ENCODE measurements at regions of chr9 and their contacts with region 1.

Region 1: GRCh38 chr9:72586388-72587130 is 65.2 kb downstream of the TMC1 start:
- DNase-seq: peak in 1 of 9 donors; percentile 28
- ATAC-seq: peak; percentile 86
- H3K4me3 ChIP-seq: no peak overlapping the region
- H3K4me3 Mint-ChIP-seq: peak overlapping the region in 1 of 10 donors; percentile 61
- H3K27ac ChIP-seq: no peak overlapping the region
- H3K27ac Mint-ChIP-seq: peak overlapping the region in 2 of 9 donors; percentile 23 to 56
- H3K4me1 ChIP-seq: no peaks in the 10 kb centered on the region
- H3K4me1 Mint-ChIP-seq: peaks cover 6 to 51% (median 11%) of the 10 kb centered on the region in 7 donors
- H3K27me3 ChIP-seq: no peaks in the 10 kb centered on the region
- H3K27me3 Mint-ChIP-seq: no peaks in the 10 kb centered on the region

Region 2: DNA sequence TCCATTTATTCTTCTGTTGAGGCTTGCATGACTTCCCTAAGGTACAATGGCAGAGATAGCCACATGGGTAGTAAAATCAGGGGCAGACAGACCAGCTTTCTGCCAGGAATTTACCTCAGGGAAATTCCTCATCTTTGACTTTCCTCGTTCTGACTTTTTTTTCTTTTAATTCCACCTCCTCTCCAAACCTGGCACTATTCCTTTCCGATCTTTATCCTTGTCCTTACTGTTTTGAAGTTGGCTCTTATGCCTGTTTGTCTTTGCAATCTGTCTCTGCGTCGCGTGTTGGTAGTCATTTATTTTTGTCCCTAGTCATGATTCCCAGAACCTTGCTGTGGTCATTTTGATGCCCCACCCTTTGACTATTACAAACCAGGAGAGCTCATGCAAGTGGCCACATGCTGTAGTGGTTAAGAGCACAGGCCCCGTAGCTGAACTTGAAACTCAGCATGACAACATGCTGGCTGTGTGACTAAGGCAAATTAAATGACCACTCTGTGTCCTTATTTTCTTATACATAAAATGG is 46.1 kb before region 1 on chr9:
- CTCF ChIA-PET with region 1: no interaction called
- POLR2A ChIA-PET with region 1: no interaction called
- intact Hi-C with region 1: loop called in 1 of 2 experiments (anchors 5 kb)
- DNase-seq: no peak
- ATAC-seq: no peak
- H3K4me3 ChIP-seq: no peak overlapping the region
- H3K4me3 Mint-ChIP-seq: no peak overlapping the region
- H3K27ac ChIP-seq: no peak overlapping the region
- H3K27ac Mint-ChIP-seq: no peak overlapping the region
- H3K4me1 ChIP-seq: no peaks in the 10 kb centered on the region
- H3K4me1 Mint-ChIP-seq: peaks cover 0 to 31% (median 0%) of the 10 kb centered on the region in 7 donors
- H3K27me3 ChIP-seq: no peaks in the 10 kb centered on the region
- H3K27me3 Mint-ChIP-seq: no peaks in the 10 kb centered on the region

Region 3: DNA sequence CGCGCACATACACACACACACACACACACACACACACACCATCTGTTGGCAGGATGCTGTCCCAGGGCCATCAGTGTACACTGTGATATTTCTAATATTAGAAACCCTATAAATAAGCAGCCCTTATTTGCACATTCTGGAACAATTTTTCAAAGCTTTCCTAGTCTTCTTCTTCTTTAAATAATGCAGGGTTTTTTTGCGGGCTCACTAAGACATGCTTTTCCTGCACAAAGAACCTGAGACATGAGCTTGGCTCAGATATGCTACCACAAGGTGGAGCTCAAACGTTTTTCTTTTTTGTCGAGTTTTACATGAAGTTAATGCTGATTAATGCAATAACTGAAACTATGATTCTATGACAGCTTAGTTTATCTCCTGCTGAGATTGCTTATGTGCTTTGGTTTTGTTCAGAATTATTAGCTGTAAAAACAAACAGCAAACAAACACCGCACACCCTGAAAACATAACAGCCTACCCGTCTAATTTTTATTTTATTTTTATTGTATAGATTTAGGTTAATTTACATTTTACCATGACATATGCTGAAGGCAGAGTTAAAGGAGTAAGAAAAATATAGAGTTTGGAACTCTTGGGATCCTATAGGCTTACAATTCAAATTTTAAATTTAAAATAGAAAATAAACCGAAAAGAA is 270.5 kb after region 1 on chr9:
- CTCF ChIA-PET with region 1: no interaction called
- POLR2A ChIA-PET with region 1: no interaction called
- intact Hi-C with region 1: no loop called
- DNase-seq: peak in 1 of 9 donors; percentile 4
- ATAC-seq: peak; percentile 45
- H3K4me3 ChIP-seq: no peak overlapping the region
- H3K4me3 Mint-ChIP-seq: no peak overlapping the region
- H3K27ac ChIP-seq: no peak overlapping the region
- H3K27ac Mint-ChIP-seq: no peak overlapping the region
- H3K4me1 ChIP-seq: no peaks in the 10 kb centered on the region
- H3K4me1 Mint-ChIP-seq: peaks cover 0 to 5% (median 0%) of the 10 kb centered on the region in 7 donors
- H3K27me3 ChIP-seq: no peaks in the 10 kb centered on the region
- H3K27me3 Mint-ChIP-seq: peaks cover 0 to 5% (median 0%) of the 10 kb centered on the region in 5 donors

Region 4: DNA sequence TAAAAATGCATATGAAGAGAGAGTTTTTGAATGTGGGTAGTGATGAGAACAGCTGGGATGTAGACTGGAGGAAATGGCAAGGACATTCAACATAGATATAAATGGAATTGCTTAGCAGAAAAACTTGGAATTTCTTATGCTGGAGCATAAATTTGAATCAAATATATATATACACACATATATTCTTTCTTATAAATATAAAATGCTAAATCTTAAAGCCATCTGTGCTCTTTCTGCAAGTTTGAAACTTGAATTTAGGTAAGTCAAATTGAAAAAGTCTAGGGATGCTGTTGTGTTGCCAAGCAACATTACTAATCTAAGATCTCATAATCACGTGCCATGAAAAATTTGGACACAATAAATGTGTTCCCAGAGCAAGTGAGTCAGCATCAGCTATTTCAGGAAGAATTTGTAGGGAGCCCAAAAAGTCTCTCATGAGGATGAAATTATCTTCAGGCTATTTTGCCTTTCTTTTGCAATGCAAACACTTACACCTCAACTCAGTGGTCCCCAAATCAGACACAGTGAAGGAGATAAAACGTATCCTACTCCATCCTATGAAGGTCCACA is 424.7 kb after region 1 on chr9:
- CTCF ChIA-PET with region 1: no interaction called
- POLR2A ChIA-PET with region 1: no interaction called
- intact Hi-C with region 1: no loop called
- DNase-seq: no peak
- ATAC-seq: no peak
- H3K4me3 ChIP-seq: no peak overlapping the region
- H3K4me3 Mint-ChIP-seq: no peak overlapping the region
- H3K27ac ChIP-seq: no peak overlapping the region
- H3K27ac Mint-ChIP-seq: no peak overlapping the region
- H3K4me1 ChIP-seq: no peaks in the 10 kb centered on the region
- H3K4me1 Mint-ChIP-seq: peaks cover 0 to 2% (median 0%) of the 10 kb centered on the region in 7 donors
- H3K27me3 ChIP-seq: no peaks in the 10 kb centered on the region
- H3K27me3 Mint-ChIP-seq: peaks cover 31 to 57% (median 40%) of the 10 kb centered on the region in 5 donors